GM12878 (cell line): ENCODE measurements at regions of chr5 and their contacts with region 1.

Region 1: GRCh38 chr5:157130925-157131324 is 11.7 kb downstream of the MED7 start:
- DNase-seq: no peak
- ATAC-seq: peak; percentile 82
- H3K4me3 ChIP-seq: no peak overlapping the region
- H3K27ac ChIP-seq: no peak overlapping the region
- H3K4me1 ChIP-seq: peaks cover 5% of the 10 kb centered on the region; the same call in 1 of the 2 replicates
- H3K27me3 ChIP-seq: no peaks in the 10 kb centered on the region
- CTCF ChIP-seq: no peak
- EP300 ChIP-seq: no peak
- POLR2A ChIP-seq: no peak
- RAD21 ChIP-seq: peak; percentile 11; the same call in 1 of the 2 replicates

Region 2: DNA sequence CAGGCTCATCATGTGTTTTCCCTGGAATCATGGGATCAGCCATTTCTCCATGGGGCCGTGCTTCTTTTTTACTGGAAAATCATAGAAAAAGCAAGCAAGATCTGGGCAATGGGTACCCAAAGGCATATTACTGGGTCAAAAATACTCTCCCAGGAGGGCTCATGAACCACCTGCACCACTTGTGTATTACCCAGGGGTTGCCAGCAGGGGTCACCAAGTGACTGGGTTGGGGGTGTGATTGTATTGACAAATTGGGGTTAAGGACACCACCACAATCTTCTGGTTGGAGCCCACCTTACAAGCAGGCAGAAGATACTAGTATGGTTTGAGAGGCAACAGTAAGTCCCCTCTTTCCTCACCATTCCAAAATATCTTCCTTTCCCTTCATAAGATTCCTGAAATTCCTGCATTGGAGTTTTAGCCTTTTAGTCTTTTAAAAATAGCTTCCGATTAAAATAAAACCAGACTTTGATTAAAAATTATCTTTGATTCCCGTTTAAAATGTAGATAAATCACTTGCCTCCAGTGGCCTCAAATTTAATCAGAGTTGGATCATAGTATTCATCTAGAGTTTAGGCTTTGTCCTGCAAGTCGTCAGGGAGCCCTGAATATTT is 1514.0 kb before region 1 on chr5:
- CTCF ChIA-PET with region 1: interaction called, 3 read pairs
- POLR2A ChIA-PET with region 1: no interaction called
- RAD21 ChIA-PET with region 1: no interaction called
- SMC1A ChIA-PET with region 1: interaction called, 5 read pairs
- in situ Hi-C with region 1: loop called (anchors 10 kb)
- intact Hi-C with region 1: loop called (anchors 5 kb)
- DNase-seq: no peak
- ATAC-seq: peak; percentile 84
- H3K4me3 ChIP-seq: no peak overlapping the region
- H3K27ac ChIP-seq: no peak overlapping the region
- H3K4me1 ChIP-seq: no peaks in the 10 kb centered on the region
- H3K27me3 ChIP-seq: no peaks in the 10 kb centered on the region
- CTCF ChIP-seq: peak; percentile 65 to 80 (median 73)
- EP300 ChIP-seq: no peak
- POLR2A ChIP-seq: no peak
- RAD21 ChIP-seq: peak; percentile 87

Region 3: DNA sequence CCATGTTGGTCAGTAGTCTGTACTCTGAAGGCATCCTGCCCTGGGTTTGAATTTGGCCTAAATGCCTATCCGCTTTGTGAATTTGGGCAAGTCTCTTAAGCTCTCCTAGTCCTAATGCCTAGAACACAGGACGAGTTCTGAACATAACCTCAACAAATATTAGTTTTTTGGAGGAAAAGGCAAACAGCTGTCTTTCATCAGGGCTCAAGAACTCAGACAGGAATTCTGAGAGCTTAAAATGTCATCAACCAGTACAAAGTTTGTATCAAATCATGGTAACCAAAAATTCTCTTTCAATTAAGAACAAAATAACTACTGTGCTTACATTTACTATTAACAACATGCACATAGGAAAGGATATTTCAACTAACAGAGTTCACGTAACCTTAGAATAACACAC is 463.3 kb before region 1 on chr5:
- CTCF ChIA-PET with region 1: interaction called, 14 read pairs
- POLR2A ChIA-PET with region 1: no interaction called
- RAD21 ChIA-PET with region 1: interaction called, 3 read pairs
- SMC1A ChIA-PET with region 1: interaction called, 3 read pairs
- in situ Hi-C with region 1: loop called (anchors 10 kb)
- intact Hi-C with region 1: loop called (anchors 5 kb)
- DNase-seq: no peak
- ATAC-seq: no peak
- H3K4me3 ChIP-seq: no peak overlapping the region
- H3K27ac ChIP-seq: no peak overlapping the region
- H3K4me1 ChIP-seq: no peaks in the 10 kb centered on the region
- H3K27me3 ChIP-seq: peaks cover 0 to 1% of the 10 kb centered on the region in 2 experiments; a peak in 2 of 4 replicates
- CTCF ChIP-seq: no peak
- EP300 ChIP-seq: no peak
- POLR2A ChIP-seq: no peak
- RAD21 ChIP-seq: no peak

Region 4: GRCh38 chr5:156824800-156825199 is 306.1 kb before region 1 on chr5:
- CTCF ChIA-PET with region 1: interaction called, 7 read pairs
- POLR2A ChIA-PET with region 1: no interaction called
- RAD21 ChIA-PET with region 1: interaction called, 5 read pairs
- SMC1A ChIA-PET with region 1: interaction called, 6 read pairs
- in situ Hi-C with region 1: no loop called
- intact Hi-C with region 1: loop called (anchors 5 kb)
- DNase-seq: no peak
- ATAC-seq: no peak
- H3K4me3 ChIP-seq: no peak overlapping the region
- H3K27ac ChIP-seq: no peak overlapping the region
- H3K4me1 ChIP-seq: peaks cover 11% of the 10 kb centered on the region
- H3K27me3 ChIP-seq: no peaks in the 10 kb centered on the region
- CTCF ChIP-seq: peak; percentile 4 to 45 (median 19); a peak in 2 of 6 replicates
- EP300 ChIP-seq: no peak
- POLR2A ChIP-seq: no peak
- RAD21 ChIP-seq: peak; percentile 49

Region 5: GRCh38 chr5:156920042-156920860 is 210.7 kb before region 1 on chr5:
- CTCF ChIA-PET with region 1: interaction called, 5 read pairs
- POLR2A ChIA-PET with region 1: interaction called, 7 read pairs
- RAD21 ChIA-PET with region 1: interaction called, 13 read pairs
- SMC1A ChIA-PET with region 1: interaction called, 8 read pairs
- in situ Hi-C with region 1: no loop called
- intact Hi-C with region 1: no loop called
- DNase-seq: peak; percentile 77
- ATAC-seq: peak; percentile 68
- H3K4me3 ChIP-seq: peak overlapping the region; percentile 63
- H3K27ac ChIP-seq: peak overlapping the region; percentile 93
- H3K4me1 ChIP-seq: peaks cover 17% of the 10 kb centered on the region
- H3K27me3 ChIP-seq: no peaks in the 10 kb centered on the region
- CTCF ChIP-seq: no peak
- EP300 ChIP-seq: peak; percentile 80 to 88; a peak in 3 of 4 replicates
- POLR2A ChIP-seq: no peak
- RAD21 ChIP-seq: no peak

Region 6: DNA sequence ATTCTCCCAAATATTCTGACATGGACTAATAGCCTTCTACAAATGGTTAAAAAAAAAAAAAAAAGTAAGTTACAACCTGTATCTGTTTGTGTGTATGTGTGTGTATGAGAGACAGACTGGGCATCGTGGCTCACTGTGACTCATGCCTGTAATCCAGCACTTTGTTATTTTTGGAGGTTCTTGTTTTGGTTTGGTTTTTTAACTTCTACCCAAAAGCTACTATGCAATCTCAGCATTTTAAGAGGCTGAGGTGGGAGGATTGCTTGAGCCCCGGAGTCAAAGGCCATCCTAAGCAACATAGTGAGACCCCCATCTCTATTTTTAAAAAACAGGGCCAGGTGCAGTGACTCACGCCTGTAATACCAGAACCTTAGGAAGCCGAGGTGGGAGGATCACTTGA is 54.4 kb before region 1 on chr5:
- CTCF ChIA-PET with region 1: interaction called, 8 read pairs
- POLR2A ChIA-PET with region 1: interaction called, 4 read pairs
- RAD21 ChIA-PET with region 1: interaction called, 3 read pairs
- SMC1A ChIA-PET with region 1: interaction called, 5 read pairs
- in situ Hi-C with region 1: no loop called
- intact Hi-C with region 1: loop called (anchors 2 kb)
- DNase-seq: no peak
- ATAC-seq: peak; percentile 69
- H3K4me3 ChIP-seq: no peak overlapping the region
- H3K27ac ChIP-seq: no peak overlapping the region
- H3K4me1 ChIP-seq: peaks cover 17% of the 10 kb centered on the region
- H3K27me3 ChIP-seq: no peaks in the 10 kb centered on the region
- CTCF ChIP-seq: no peak
- EP300 ChIP-seq: no peak
- POLR2A ChIP-seq: no peak
- RAD21 ChIP-seq: no peak

Region 7: GRCh38 chr5:157142317-157143126 is 11.6 kb after region 1 on chr5 and contains the start of gene MED7:
- CTCF ChIA-PET with region 1: interaction called, 16 read pairs
- POLR2A ChIA-PET with region 1: interaction called, 9 read pairs
- RAD21 ChIA-PET with region 1: interaction called, 20 read pairs
- SMC1A ChIA-PET with region 1: interaction called, 21 read pairs
- in situ Hi-C with region 1: no loop called
- intact Hi-C with region 1: no loop called
- DNase-seq: peak; percentile 99
- ATAC-seq: peak; percentile 100
- H3K4me3 ChIP-seq: peak within 1 kb of the TSS; percentile 88
- H3K27ac ChIP-seq: peak within 1 kb of the TSS; percentile 99
- H3K4me1 ChIP-seq: peaks cover 7% of the 10 kb centered on the region
- H3K27me3 ChIP-seq: no peaks in the 10 kb centered on the region
- CTCF ChIP-seq: no peak
- EP300 ChIP-seq: no peak
- POLR2A ChIP-seq: peak; percentile 96
- RAD21 ChIP-seq: no peak
- polyA plus RNA-seq, gene MED7: 42.6 to 47.7 TPM